ENCODE measurements at regions of chr6 and their contacts with region 1.

Region 1: GRCh38 chr6:159789377-159790148 is at the start of gene TCP1:
- DNase-seq: peak; percentile 97 to 100 (median 99)

Region 2: GRCh38 chr6:159726918-159727716 is 62.4 kb before region 1 on chr6 and contains the start of gene WTAP:
- intact Hi-C with region 1: loop called (anchors 1 kb)
- DNase-seq: peak; percentile 86 to 98 (median 95)

Region 3: DNA sequence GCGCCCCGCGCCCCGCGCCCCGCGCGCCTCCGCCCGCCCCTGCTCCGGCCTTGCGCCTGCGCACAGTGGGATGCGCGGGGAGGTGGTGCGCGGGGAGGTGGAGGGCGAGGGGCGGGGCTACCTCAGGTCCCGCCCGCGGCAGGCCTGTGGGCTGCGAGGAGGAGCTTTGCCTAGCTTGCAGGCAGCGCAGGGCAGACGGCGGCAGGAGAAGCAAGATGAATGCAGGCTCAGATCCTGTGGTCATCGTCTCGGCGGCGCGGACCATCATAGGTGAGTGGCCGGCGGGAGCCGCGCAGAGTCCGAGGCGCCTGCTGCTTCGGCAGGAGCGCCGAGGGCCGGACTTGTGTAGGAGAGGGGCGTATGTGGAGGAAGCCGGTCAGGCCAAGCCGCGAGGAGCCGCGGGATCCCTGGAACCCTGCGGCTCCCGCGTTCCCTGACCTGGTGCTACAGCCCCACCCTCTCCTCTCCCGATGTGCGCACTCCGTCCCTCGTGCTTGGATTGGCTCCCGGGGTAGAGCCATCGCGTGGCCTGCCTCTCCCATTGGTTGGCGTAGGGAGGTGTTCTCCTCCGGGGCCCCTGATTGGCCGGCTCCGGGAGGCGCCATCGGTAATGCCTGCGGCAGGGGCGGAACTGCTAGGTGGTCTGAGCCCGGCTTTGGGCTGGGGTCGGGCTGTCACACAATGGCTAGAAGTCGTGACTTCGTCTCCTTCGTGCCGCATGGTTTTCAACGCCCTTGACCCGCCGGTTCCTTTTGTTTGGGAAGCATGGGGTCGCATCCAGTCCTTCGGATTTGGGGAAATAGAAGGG is 27.5 kb before region 1 on chr6 and contains the start of gene ACAT2:
- intact Hi-C with region 1: loop called (anchors 2 kb)
- DNase-seq: peak; percentile 96 to 100 (median 99)

Measured in head of caudate nucleus (tissue), 42 donors.